ENCODE measurements at regions of chr2 and their contacts with region 1.

Region 1: GRCh38 chr2:230068016-230068650 is 591 bp downstream of the SLC16A14 start:
- DNase-seq: peak; percentile 47
- H3K4me3 Mint-ChIP-seq: peak overlapping the region; percentile 86
- H3K27ac Mint-ChIP-seq: peak overlapping the region; percentile 94
- H3K4me1 Mint-ChIP-seq: peaks cover 20% of the 10 kb centered on the region
- H3K27me3 Mint-ChIP-seq: peaks cover 21% of the 10 kb centered on the region

Region 2: DNA sequence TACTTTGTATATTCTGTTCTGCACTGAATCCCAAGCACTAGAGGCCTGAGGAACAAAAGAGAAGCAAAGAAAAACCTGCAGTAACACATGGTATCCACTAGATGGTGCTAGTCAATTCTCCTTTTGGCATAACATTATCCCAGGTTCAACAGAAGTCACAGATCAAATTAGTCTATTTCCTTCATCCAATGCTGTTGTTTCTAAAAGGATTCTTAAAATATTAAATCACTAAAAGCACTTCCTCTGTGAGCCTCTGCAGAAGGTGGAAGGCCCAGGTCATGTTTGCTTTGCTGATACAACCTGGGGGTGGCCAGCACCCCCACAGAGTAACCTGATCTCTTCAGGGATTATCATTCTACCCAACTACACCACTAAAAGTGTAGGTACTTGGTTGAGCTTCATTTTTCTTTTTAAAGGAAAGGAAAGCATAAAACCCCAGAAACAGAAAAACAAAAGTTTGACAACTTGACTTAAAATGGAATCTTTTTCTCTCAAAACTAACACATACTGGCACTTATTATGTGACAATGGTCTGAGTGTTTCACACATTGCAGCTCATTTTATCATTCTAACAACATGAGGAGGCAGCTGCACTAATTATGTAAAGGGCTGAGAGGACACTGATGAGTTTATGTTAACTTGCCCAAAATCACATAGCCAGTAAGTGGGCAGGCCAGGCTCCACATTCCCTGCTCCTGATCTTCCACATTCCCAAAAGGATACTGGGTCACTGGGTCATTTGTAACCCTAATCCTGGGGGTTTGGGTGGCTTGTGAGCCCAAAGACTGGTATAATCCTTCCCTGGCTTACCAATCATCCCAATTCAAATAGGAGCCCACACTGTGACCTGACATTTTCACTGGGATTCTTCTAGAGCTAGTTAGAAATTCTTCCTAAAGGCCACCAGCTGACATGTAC is 287.0 kb before region 1 on chr2:
- intact Hi-C with region 1: loop called (anchors 5 kb)
- DNase-seq: no peak
- H3K4me3 Mint-ChIP-seq: no peak overlapping the region
- H3K27ac Mint-ChIP-seq: no peak overlapping the region
- H3K4me1 Mint-ChIP-seq: peaks cover 26% of the 10 kb centered on the region
- H3K27me3 Mint-ChIP-seq: no peaks in the 10 kb centered on the region

Region 3: DNA sequence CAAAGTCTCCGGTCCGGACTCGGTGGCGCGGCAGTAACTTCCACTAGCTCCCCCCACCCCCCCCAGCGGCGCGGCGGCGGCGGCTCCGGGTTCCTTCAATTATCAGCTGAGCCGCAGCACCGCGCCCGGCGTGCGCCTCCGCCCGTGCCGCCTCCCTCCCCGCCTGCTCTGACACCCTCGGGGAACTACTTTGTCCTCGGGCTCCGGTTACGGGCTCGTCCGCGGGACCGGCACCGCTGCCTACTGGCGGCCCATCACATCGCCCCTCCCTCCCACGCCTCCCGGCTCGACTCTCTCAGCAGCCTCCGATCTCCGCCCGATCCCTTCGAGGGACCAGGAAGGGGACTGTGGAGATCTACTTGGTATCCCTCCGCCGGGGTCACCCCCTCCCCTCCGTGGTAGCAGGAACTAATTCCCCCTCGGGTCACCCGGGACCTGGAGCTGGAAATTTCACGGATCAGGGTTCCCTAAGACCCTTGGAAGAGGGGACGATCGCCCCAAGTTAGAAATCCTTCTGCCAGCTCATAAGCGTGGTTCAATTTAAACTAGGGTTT is 146.2 kb before region 1 on chr2 and contains the start of gene TRIP12:
- intact Hi-C with region 1: loop called (anchors 10 kb)
- DNase-seq: peak; percentile 89
- H3K4me3 Mint-ChIP-seq: peak within 1 kb of the TSS; percentile 100
- H3K27ac Mint-ChIP-seq: peak within 1 kb of the TSS; percentile 98
- H3K4me1 Mint-ChIP-seq: peaks cover 31% of the 10 kb centered on the region
- H3K27me3 Mint-ChIP-seq: no peaks in the 10 kb centered on the region
- total RNA-seq, gene TRIP12: 256 and 269 TPM in 2 replicates

Region 4: GRCh38 chr2:230007931-230008707 is 60.0 kb before region 1 on chr2:
- intact Hi-C with region 1: loop called (anchors 1 kb)
- DNase-seq: peak; percentile 68
- H3K4me3 Mint-ChIP-seq: no peak overlapping the region
- H3K27ac Mint-ChIP-seq: no peak overlapping the region
- H3K4me1 Mint-ChIP-seq: peaks cover 10% of the 10 kb centered on the region
- H3K27me3 Mint-ChIP-seq: no peaks in the 10 kb centered on the region

Region 5: GRCh38 chr2:230160112-230160660 is 92.1 kb after region 1 on chr2:
- intact Hi-C with region 1: loop called (anchors 2 kb)
- DNase-seq: peak; percentile 38
- H3K4me3 Mint-ChIP-seq: no peak overlapping the region
- H3K27ac Mint-ChIP-seq: peak overlapping the region; percentile 24
- H3K4me1 Mint-ChIP-seq: peaks cover 13% of the 10 kb centered on the region
- H3K27me3 Mint-ChIP-seq: no peaks in the 10 kb centered on the region